ENCODE measurements at regions of chr17 and their contacts with region 1.

Region 1: GRCh38 chr17:75109407-75110233 is at the start of gene ARMC7:
- DNase-seq: peak; percentile 91
- H3K4me3 Mint-ChIP-seq: peak within 1 kb of the TSS; percentile 89
- H3K27ac Mint-ChIP-seq: peak within 1 kb of the TSS; percentile 80
- H3K4me1 Mint-ChIP-seq: peaks cover 24% of the 10 kb centered on the region
- H3K27me3 Mint-ChIP-seq: no peaks in the 10 kb centered on the region
- total RNA-seq, gene ARMC7: 9.9 and 10.1 TPM in 2 replicates

Region 2: DNA sequence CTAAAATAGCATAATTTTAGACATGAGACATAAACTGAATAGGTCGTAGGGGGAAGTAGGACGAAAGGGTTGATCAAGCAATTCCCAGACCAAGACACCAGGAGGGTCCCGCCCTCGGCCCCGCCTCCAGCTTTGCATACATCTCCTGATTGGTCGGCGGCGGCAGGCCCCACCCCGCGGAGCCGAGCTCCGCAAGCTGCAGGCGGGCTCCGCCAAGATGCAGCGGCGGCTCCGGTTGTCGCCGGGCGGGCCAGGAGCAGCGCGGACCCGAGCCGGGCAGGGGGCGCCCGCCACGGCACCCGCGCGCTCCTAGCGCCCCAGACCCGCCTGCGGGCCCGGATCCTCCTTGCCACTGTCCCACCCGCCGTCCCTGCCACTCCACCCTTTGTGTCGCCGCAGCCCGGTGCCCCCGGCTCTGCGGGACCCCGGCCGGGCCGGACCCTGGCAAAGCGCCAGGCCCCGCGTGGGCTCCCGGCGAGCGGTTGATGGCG is 122.2 kb before region 1 on chr17 and contains the start of gene CDR2L:
- intact Hi-C with region 1: loop called (anchors 10 kb)
- DNase-seq: peak; percentile 88
- H3K4me3 Mint-ChIP-seq: peak within 1 kb of the TSS; percentile 83
- H3K27ac Mint-ChIP-seq: no peak within 1 kb of the TSS
- H3K4me1 Mint-ChIP-seq: peaks cover 10% of the 10 kb centered on the region
- H3K27me3 Mint-ChIP-seq: peaks cover 35% of the 10 kb centered on the region
- total RNA-seq, gene CDR2L: 2.3 and 2.4 TPM in 2 replicates

Region 3: DNA sequence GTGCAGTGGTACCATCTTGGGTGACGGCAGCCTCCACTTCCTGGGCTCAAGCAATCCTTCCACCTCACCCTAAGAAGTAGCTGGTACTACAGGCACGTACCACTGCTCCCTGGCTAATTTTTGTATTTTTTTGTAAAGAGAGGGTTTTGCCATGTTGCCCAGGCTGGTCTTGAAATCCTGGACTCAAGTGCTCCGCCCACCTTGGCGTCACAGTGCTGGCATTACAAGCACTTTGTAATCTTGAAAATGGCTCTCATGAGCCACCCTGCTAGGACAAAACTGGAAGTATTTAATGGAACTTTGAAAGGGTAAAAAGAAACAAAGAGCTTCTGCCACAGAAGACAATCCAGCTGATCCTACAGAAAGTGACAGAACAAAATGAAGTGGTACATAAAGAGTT is 63.9 kb after region 1 on chr17:
- intact Hi-C with region 1: loop called (anchors 5 kb)
- DNase-seq: no peak
- H3K4me3 Mint-ChIP-seq: no peak overlapping the region
- H3K27ac Mint-ChIP-seq: no peak overlapping the region
- H3K4me1 Mint-ChIP-seq: peaks cover 10% of the 10 kb centered on the region
- H3K27me3 Mint-ChIP-seq: no peaks in the 10 kb centered on the region

Region 4: DNA sequence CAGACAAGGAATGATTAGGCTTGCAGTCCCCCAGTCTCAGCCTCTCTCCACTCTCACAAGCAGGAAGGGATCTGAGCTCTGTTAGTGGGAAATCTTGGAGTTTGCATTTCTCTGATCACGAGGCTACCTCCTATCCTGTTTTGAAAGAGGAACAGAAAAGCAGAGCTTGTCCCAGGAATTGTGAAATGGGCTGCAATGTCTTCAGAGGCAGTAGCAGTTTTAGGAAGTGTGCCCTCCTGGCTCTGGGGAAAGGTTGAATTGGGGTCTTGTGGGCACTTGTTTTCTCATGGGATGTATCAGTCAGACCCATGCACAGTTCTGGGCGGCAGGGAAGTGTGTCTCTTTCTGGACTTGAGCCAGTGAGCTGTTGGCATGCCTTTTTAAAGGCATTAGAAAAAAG is 118.7 kb after region 1 on chr17:
- intact Hi-C with region 1: no loop called
- DNase-seq: no peak
- H3K4me3 Mint-ChIP-seq: no peak overlapping the region
- H3K27ac Mint-ChIP-seq: no peak overlapping the region
- H3K4me1 Mint-ChIP-seq: no peaks in the 10 kb centered on the region
- H3K27me3 Mint-ChIP-seq: no peaks in the 10 kb centered on the region

Region 5: DNA sequence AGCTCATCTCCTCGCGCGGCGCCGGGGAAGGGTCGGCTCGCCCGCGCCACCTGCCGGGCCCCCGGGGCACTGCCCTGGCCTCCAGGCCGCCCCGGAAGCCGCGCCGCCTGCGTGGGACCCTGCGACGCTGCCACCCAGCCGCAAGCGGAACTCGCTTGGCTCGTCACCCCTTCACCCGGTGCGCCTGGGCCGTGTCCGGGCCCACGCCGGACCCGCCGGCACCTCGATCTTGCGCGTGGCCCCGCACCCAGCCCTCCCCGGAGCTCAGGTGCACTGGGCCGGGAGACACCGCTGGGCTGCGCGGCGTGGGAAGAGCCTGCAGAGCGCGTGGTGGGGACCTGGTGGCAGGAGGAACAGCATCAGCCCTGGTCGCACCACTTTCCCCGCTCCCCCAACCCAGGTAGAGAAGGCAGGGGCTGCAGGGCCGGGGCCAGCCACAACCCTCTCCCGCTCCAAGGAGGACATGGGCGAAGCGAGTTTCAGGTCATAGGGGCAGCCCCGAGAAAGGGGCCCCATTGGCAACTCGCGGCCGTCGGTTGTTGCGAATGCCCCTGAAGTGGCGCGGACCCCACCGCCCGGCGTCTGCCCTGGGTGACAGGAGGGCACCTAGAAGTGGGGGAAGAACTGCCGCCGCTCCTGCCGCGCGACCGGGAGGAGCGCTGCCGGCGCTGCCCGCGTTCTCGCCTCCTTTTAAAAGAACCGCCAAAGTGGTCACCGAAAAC is 161.8 kb after region 1 on chr17:
- intact Hi-C with region 1: loop called (anchors 5 kb)
- DNase-seq: peak; percentile 87
- H3K4me3 Mint-ChIP-seq: peak overlapping the region; percentile 88
- H3K27ac Mint-ChIP-seq: peak overlapping the region; percentile 74
- H3K4me1 Mint-ChIP-seq: peaks cover 33% of the 10 kb centered on the region
- H3K27me3 Mint-ChIP-seq: no peaks in the 10 kb centered on the region